Activated B cell treated with CpG ODN at 0.5 μM for 24 hours (primary cell): ENCODE measurements at regions of chr17 and their contacts with region 1.

Region 1: DNA sequence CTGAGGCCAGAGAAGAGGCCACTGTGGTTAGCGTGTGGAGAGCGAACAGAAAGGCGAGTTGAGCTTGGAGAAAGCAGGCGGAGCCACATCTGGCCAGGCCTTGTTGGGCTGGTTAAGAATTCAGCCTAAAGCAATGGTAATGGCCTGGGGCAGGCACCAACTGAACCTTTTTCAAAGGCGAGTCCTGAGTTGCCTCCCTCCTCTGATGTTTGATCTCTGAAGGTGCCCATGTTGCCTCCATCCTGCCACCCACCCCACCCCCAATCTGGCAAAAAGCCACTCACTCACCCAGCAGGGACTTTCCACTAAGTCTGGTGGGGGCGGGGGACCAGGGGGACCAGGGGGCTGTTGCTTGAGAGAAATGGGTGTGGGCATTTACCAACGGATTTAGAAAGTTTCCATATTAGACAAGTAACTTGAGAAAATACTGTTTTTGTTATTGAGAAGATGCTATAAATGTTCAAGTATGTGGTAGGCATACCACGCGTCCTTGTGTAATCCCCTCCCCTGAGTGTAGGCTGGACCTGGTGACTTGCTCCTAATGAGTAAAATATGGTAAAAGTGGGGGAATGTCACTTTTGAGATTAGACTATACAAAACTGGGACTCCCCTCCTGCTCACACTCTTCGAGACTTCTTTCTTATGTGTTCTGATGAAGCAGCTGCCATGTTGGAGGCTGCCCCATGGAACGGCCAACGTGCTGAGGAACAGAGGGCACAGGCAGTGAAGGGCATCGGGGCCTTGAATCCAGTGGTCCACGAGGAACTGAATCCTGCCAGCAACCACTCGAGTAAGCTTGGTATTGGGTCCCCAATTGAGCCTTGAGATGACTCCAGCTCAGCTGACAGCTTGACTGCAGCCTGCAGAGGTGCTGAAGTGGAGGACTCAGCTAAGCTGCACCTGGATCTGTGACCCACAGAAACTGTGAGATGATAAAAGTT is 29.9 kb upstream of the TNS4 start:
- DNase-seq: no peak
- ATAC-seq: peak; percentile 26
- H3K4me3 Mint-ChIP-seq: peak overlapping the region; percentile 42
- H3K27ac Mint-ChIP-seq: peak overlapping the region; percentile 93
- H3K4me1 Mint-ChIP-seq: peaks cover 61% of the 10 kb centered on the region
- H3K27me3 Mint-ChIP-seq: no peaks in the 10 kb centered on the region
- CTCF ChIP-seq: no peak

Region 2: DNA sequence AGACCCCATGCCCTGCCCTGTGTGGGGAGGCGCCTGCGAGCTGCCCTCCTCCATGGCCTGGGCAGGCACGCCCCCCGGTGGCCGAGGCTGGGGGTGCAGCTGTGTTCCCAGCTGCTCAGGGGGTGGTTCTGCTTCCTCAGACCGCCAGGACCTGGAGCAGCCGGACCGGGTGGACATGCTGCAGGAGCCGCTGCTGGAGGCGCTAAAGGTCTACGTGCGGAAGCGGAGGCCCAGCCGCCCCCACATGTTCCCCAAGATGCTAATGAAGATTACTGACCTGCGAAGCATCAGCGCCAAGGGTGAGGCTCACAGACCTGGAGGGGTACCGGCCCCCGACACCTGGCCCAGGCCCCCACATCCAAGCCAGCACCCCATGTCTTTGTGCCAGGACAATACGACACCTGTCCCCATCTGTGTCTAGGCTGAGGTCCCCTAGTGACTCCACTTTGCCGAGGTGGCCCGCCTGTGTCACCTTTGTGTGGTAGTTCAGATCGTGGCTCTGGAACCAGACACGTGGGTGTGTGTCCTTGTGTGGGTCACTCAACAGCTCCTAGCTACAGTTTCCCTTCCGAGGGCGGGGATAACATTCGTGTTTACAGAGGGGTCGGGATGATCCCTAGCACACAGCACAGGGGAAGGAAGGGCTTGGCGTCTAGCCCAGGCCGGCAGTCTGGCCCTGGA is 176.1 kb before region 1 on chr17:
- CTCF ChIA-PET with region 1: interaction called, 70 read pairs
- POLR2A ChIA-PET with region 1: interaction called, 5 read pairs
- intact Hi-C with region 1: loop called (anchors 1 kb)
- DNase-seq: peak; percentile 86
- ATAC-seq: peak; percentile 78
- H3K4me3 Mint-ChIP-seq: no peak overlapping the region
- H3K27ac Mint-ChIP-seq: peak overlapping the region; percentile 59
- H3K4me1 Mint-ChIP-seq: peaks cover 44% of the 10 kb centered on the region
- H3K27me3 Mint-ChIP-seq: no peaks in the 10 kb centered on the region
- CTCF ChIP-seq: peak; percentile 53

Region 3: GRCh38 chr17:40417609-40418427 is 113.5 kb before region 1 on chr17 and contains the start of gene TOP2A:
- CTCF ChIA-PET with region 1: interaction called, 17 read pairs
- POLR2A ChIA-PET with region 1: interaction called, 17 read pairs
- intact Hi-C with region 1: loop called (anchors 5 kb)
- DNase-seq: peak; percentile 91
- ATAC-seq: peak; percentile 100
- H3K4me3 Mint-ChIP-seq: peak within 1 kb of the TSS; percentile 94
- H3K27ac Mint-ChIP-seq: peak within 1 kb of the TSS; percentile 84
- H3K4me1 Mint-ChIP-seq: peaks cover 23% of the 10 kb centered on the region
- H3K27me3 Mint-ChIP-seq: no peaks in the 10 kb centered on the region
- CTCF ChIP-seq: no peak
- total RNA-seq, gene TOP2A: 5.3 and 6.6 TPM in 2 replicates

Region 4: GRCh38 chr17:40480501-40481003 is 50.8 kb before region 1 on chr17:
- CTCF ChIA-PET with region 1: interaction called, 64 read pairs
- POLR2A ChIA-PET with region 1: interaction called, 18 read pairs
- intact Hi-C with region 1: loop called (anchors 2 kb)
- DNase-seq: peak; percentile 32
- ATAC-seq: peak; percentile 88
- H3K4me3 Mint-ChIP-seq: peak overlapping the region; percentile 41
- H3K27ac Mint-ChIP-seq: peak overlapping the region; percentile 72
- H3K4me1 Mint-ChIP-seq: peaks cover 57% of the 10 kb centered on the region
- H3K27me3 Mint-ChIP-seq: no peaks in the 10 kb centered on the region
- CTCF ChIP-seq: no peak

Region 5: DNA sequence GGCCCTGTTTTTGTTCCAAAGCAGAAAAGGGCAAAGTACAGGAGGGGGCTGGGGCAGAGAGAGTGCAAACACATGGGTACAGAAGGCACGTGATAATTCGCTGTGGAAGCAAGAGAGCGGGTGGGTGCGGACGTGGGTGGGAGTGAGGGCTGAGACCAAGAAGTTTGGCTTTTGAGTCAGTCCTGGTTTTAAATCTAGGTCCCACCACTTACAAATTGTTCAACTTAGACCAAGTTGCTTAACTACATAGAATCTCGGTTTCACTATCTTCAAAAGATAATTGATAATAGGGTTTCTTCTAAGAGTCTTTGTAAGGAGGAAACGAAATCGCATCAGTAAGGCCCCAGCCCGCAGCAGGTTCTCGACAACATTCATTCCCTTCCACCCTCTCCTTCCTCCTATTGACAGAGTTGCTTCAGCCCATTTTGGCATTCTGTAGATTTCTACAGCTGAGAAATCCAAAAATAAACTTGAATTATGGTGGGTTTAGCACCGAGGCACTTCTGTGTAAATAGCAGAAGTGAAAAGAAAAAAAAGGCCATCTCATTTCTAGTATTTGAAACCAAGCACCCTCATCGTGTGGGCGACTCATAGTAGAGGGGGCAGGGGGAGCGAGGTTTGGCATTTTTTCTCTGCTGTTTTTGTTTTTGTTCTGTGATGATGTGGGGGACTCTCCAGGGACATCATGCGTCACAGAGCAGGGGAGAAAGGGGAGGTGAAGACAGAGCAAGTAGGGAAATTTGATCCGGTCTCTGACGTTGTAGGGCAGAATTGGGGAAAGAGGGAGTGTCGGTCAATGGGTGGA is 67.5 kb after region 1 on chr17:
- CTCF ChIA-PET with region 1: no interaction called
- POLR2A ChIA-PET with region 1: interaction called, 9 read pairs
- intact Hi-C with region 1: loop called (anchors 1 kb)
- DNase-seq: peak; percentile 70
- ATAC-seq: peak; percentile 75
- H3K4me3 Mint-ChIP-seq: peak overlapping the region; percentile 59
- H3K27ac Mint-ChIP-seq: peak overlapping the region; percentile 92
- H3K4me1 Mint-ChIP-seq: peaks cover 95% of the 10 kb centered on the region
- H3K27me3 Mint-ChIP-seq: no peaks in the 10 kb centered on the region
- CTCF ChIP-seq: no peak

Region 6: DNA sequence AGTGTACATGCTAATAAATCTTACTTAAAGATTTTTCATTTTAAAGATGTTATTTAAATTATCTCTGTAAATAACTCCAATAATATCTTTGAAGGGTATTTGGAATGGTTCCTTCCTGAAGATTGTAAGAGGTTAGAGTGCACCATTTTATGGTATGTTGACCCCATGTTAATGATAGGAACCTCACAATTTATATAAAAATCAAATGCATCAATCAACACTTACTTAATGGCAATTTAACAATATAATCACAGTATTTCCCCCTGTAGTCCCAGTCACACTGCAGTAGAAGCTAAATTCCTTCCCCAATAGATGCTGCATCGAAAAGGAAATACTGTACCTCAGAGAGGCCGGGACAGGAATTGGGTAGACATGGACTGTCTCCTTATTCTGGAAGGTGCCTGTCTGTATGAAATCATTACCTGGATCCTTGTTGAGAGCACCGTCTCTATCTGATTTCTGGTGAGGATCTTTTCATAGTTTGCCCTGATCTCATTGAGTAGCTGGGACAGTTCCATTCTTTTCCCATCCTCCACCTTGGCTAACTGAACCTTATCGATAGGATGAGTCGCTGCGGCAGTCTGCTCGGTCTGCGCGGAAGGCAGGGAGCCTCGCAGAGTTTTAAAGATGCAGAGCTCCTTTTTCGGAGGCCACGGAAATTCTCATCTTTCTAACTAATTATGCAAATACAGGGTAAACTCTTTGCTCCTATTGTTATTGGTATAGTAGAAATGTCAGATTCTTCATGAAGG is 133.4 kb after region 1 on chr17 and contains the start of gene KRT222:
- CTCF ChIA-PET with region 1: no interaction called
- POLR2A ChIA-PET with region 1: no interaction called
- intact Hi-C with region 1: no loop called
- DNase-seq: no peak
- ATAC-seq: no peak
- H3K4me3 Mint-ChIP-seq: no peak within 1 kb of the TSS
- H3K27ac Mint-ChIP-seq: no peak within 1 kb of the TSS
- H3K4me1 Mint-ChIP-seq: peaks cover 6% of the 10 kb centered on the region
- H3K27me3 Mint-ChIP-seq: peaks cover 35% of the 10 kb centered on the region
- CTCF ChIP-seq: no peak
- total RNA-seq, gene KRT222: not detected in 2 replicates

Region 7: GRCh38 chr17:41648411-41649195 is 1117.3 kb after region 1 on chr17:
- CTCF ChIA-PET with region 1: no interaction called
- POLR2A ChIA-PET with region 1: no interaction called
- intact Hi-C with region 1: loop called (anchors 5 kb)
- DNase-seq: peak; percentile 85
- ATAC-seq: peak; percentile 91
- H3K4me3 Mint-ChIP-seq: peak overlapping the region; percentile 79
- H3K27ac Mint-ChIP-seq: peak overlapping the region; percentile 54
- H3K4me1 Mint-ChIP-seq: peaks cover 10% of the 10 kb centered on the region
- H3K27me3 Mint-ChIP-seq: no peaks in the 10 kb centered on the region
- CTCF ChIP-seq: peak; percentile 88